Activated CD4-positive, alpha-beta memory T cell treated with anti-CD3 and anti-CD28 coated beads, Interleukin-2, amount 10 ng/mL, durations not matched to agents 7 days and 5 days (primary cell): ENCODE measurements at regions of chr2 and their contacts with region 1.

Region 1: DNA sequence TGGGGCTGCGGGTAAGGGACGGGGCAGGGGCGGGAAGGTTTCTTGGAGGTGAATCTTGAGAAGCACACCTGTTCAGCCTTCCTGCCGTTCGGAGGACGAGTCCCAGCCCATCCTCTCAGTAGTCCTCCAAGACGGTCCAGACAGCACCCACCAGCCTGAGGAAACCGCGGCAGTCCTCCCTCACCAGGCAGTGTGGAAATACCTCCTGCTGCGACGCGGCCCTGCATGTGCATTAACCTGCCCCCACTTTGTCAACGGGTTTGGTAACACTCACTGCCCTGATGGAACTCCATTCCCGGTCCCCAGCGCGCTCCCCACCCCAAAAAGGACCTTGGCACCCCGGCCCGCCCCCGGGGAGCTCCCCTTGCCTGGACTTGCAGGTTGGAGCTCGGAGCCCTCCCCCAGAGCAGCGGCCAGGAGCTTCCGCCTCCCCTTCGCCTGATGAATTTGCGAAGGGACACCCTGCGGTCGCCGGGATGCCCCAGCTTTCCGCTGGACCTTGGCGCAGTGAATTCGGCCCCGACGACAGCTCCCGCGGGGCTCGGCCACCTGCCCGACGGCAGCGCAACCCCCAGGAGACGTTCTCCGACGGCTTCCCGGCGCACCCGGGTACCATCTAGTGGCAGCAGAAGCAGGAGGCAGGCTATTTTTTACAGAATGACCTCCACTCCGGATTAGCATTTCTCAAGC is 31.5 kb downstream of the ACVR1C start:
- DNase-seq: peak; percentile 58
- H3K4me3 Mint-ChIP-seq: peak overlapping the region; percentile 46
- H3K27ac Mint-ChIP-seq: no peak overlapping the region
- H3K4me1 Mint-ChIP-seq: peaks cover 8% of the 10 kb centered on the region
- H3K27me3 Mint-ChIP-seq: peaks cover 11% of the 10 kb centered on the region

Region 2: DNA sequence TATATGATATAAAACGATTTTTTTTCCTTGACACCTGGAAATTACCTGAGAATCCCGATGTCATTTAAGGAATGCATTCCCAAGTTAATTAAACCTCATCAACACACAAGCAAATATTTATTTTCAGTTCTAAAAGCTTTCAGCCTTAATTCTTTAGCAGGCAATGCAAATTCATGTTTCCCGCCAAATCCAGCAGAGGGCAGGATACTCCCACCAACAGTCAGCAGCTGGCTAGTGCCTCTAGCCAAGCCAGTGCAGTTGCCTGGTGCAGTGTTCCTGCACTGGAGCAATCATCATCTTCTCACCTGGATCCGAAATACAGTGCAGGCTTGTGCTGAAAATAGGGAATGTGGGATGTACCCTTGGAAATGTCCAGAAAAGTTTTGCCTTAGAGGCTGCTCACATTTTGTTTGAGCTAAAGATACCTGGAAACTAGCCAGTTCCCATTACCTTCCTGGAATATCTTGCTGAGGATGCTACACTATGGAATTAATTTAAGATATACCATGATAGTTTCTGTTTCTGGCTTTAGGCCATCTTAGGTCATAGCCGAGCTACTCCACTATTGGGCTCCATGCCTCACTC is 104.9 kb before region 1 on chr2:
- CTCF ChIA-PET with region 1: interaction called, 14 read pairs
- POLR2A ChIA-PET with region 1: no interaction called
- DNase-seq: peak; percentile 79
- H3K4me3 Mint-ChIP-seq: no peak overlapping the region
- H3K27ac Mint-ChIP-seq: no peak overlapping the region
- H3K4me1 Mint-ChIP-seq: peaks cover 66% of the 10 kb centered on the region
- H3K27me3 Mint-ChIP-seq: no peaks in the 10 kb centered on the region